Activated CD4-positive, alpha-beta memory T cell treated with anti-CD3 and anti-CD28 coated beads for 36 hours (primary cell): ENCODE measurements at regions of chr1 and their contacts with region 1.

Region 1: DNA sequence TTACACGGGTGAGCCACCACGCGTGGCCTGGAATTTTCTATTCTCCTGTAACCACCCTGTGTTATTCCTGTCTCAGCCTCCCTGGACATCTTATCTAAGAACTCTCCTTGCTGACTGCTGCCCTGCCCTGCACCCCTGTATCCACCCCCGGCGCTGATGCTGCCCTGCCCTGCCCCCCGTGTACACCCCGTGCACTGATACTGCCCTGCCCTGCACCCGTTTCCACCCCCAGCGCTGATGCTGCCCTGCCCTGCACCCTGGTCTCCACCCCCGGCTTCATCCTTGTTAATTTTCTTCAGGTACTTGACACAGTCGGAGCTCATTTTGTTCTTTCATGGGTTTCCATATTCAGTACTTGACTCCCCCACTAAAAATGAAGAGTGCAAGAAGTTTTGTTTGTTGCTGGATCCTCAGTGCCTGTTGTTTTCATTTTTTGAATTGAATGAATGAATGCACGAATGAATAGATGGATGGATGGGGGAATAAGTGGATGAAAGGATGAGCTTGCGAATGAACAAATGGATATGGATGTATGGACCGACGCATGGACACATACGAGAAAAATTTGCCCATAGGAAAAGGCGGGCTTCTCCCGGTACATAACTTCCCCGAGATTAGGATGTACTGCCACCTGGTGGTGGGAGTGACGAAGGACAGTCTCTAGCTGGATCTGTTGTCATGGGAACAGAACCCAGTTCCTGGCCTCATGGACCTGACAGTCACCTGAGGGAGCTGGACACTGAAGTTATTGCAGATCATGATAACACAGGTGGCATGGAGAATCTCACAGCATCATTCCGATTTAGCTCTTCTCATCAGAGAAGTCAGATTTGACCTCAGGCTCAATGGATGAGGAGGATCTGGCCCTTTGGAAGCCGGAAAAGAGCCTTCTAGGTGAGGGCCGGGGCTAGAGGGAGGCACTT is 14.9 kb downstream of the AADACL4 start:
- DNase-seq: peak; percentile 78
- H3K4me3 Mint-ChIP-seq: no peak overlapping the region
- H3K27ac Mint-ChIP-seq: no peak overlapping the region
- H3K4me1 Mint-ChIP-seq: peaks cover 6% of the 10 kb centered on the region
- H3K27me3 Mint-ChIP-seq: peaks cover 3% of the 10 kb centered on the region

Region 2: DNA sequence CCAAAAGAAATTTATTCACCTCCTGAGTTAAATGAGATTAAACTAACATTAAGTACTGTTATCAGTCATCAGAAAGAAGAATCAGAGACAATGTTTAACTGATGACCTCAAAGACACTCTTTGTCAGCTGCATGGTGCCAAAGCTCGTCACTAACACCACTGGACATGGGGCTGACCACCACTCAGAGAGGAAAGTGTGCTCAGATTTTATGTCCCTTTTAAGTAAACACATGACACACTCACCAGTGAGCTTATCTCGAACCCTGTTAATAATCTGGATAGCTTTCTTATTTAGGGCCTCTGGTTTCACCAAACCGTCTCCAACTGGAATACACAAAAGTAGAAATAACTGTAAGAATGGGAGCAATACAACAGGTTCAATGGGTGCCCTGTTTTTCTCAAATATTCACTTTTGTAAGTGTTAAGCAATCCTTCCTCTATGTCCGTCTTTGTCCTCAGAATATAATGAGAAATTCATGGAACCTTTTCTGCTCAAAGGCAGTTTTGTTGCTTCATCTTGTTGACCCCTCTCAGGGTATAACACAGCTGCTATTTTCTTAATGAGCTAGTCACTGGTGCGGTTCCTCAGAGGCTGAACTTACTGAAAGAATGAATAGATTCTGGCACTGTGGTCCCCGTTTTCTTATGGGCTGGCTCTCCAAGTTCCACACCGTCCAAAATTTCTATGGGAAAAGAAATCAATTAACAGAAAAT is 1549.6 kb before region 1 on chr1:
- CTCF ChIA-PET with region 1: no interaction called
- POLR2A ChIA-PET with region 1: no interaction called
- intact Hi-C with region 1: no loop called
- DNase-seq: no peak
- H3K4me3 Mint-ChIP-seq: no peak overlapping the region
- H3K27ac Mint-ChIP-seq: no peak overlapping the region
- H3K4me1 Mint-ChIP-seq: no peaks in the 10 kb centered on the region
- H3K27me3 Mint-ChIP-seq: no peaks in the 10 kb centered on the region

Region 3: GRCh38 chr1:12275369-12275768 is 383.4 kb before region 1 on chr1:
- CTCF ChIA-PET with region 1: interaction called, 118 read pairs
- POLR2A ChIA-PET with region 1: no interaction called
- intact Hi-C with region 1: loop called (anchors 1 kb)
- DNase-seq: peak; percentile 63
- H3K4me3 Mint-ChIP-seq: no peak overlapping the region
- H3K27ac Mint-ChIP-seq: no peak overlapping the region
- H3K4me1 Mint-ChIP-seq: no peaks in the 10 kb centered on the region
- H3K27me3 Mint-ChIP-seq: no peaks in the 10 kb centered on the region

Region 4: GRCh38 chr1:12296623-12297022 is 362.2 kb before region 1 on chr1:
- CTCF ChIA-PET with region 1: interaction called, 18 read pairs
- POLR2A ChIA-PET with region 1: no interaction called
- intact Hi-C with region 1: no loop called
- DNase-seq: no peak
- H3K4me3 Mint-ChIP-seq: no peak overlapping the region
- H3K27ac Mint-ChIP-seq: no peak overlapping the region
- H3K4me1 Mint-ChIP-seq: peaks cover 24% of the 10 kb centered on the region
- H3K27me3 Mint-ChIP-seq: no peaks in the 10 kb centered on the region

Region 5: DNA sequence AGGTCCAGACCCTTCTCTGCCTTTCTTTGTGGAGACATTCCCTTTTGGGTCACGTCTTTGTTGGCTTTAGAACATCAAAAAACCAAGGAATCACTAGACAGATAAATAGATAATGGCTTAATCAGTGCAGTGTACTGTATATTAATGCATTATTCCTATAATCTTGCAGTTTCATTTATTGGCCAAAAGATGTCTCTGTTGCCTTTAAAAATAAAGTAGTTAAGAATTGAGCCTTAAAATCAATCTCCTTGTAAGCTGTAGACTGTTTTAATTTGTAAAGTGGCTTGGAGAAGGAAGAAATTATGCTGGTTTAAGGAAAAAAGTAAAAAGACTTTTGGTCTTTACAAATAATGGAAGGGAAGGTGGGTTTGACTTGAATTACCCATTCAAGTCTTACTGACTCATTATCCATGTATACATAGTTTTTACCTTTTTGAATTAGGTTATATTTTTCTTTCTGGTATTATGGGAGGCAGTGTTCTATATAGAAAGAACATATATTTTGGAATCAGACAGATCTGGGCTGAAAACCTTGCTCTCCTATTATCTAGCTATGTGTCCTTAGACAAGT is 344.4 kb before region 1 on chr1:
- CTCF ChIA-PET with region 1: interaction called, 92 read pairs
- POLR2A ChIA-PET with region 1: interaction called, 3 read pairs
- intact Hi-C with region 1: loop called (anchors 1 kb)
- DNase-seq: no peak
- H3K4me3 Mint-ChIP-seq: no peak overlapping the region
- H3K27ac Mint-ChIP-seq: no peak overlapping the region
- H3K4me1 Mint-ChIP-seq: no peaks in the 10 kb centered on the region
- H3K27me3 Mint-ChIP-seq: no peaks in the 10 kb centered on the region

Region 6: GRCh38 chr1:12407050-12407961 is 251.5 kb before region 1 on chr1:
- CTCF ChIA-PET with region 1: interaction called, 11 read pairs
- POLR2A ChIA-PET with region 1: no interaction called
- intact Hi-C with region 1: no loop called
- DNase-seq: peak; percentile 21
- H3K4me3 Mint-ChIP-seq: no peak overlapping the region
- H3K27ac Mint-ChIP-seq: no peak overlapping the region
- H3K4me1 Mint-ChIP-seq: peaks cover 20% of the 10 kb centered on the region
- H3K27me3 Mint-ChIP-seq: no peaks in the 10 kb centered on the region

Region 7: GRCh38 chr1:12630946-12631530 is 27.8 kb before region 1 on chr1:
- CTCF ChIA-PET with region 1: interaction called, 19 read pairs
- POLR2A ChIA-PET with region 1: no interaction called
- intact Hi-C with region 1: no loop called
- DNase-seq: no peak
- H3K4me3 Mint-ChIP-seq: no peak overlapping the region
- H3K27ac Mint-ChIP-seq: no peak overlapping the region
- H3K4me1 Mint-ChIP-seq: peaks cover 3% of the 10 kb centered on the region
- H3K27me3 Mint-ChIP-seq: peaks cover 3% of the 10 kb centered on the region

Region 8: DNA sequence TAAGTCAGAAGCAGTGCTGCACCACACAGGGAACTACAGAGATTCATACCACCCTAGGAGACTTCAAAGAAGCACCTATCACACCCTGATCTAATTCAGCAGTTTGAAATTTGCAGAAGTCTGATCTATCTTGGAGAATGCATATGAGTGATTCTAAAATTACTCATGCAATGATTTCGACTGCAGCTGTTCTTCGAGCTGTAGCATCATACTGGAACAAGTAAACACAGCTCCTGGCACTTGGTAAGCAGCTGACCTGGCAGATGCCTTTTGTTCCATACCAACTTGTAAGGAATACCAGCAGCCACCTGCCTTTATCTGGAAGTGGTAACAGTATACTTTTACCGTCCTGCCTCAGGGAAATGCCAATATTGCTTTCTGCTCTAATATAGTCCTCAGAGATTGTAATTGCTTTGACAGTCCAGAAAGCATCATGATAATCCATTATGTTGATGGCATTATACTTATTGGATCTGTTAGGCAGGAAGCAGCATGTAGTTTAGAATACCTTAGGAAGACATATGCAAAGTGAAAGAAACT is 10.8 kb after region 1 on chr1:
- CTCF ChIA-PET with region 1: interaction called, 17 read pairs
- POLR2A ChIA-PET with region 1: no interaction called
- intact Hi-C with region 1: no loop called
- DNase-seq: no peak
- H3K4me3 Mint-ChIP-seq: no peak overlapping the region
- H3K27ac Mint-ChIP-seq: no peak overlapping the region
- H3K4me1 Mint-ChIP-seq: no peaks in the 10 kb centered on the region
- H3K27me3 Mint-ChIP-seq: peaks cover 8% of the 10 kb centered on the region